ENCODE measurements at regions of chr2 and their contacts with region 1.

Region 1: DNA sequence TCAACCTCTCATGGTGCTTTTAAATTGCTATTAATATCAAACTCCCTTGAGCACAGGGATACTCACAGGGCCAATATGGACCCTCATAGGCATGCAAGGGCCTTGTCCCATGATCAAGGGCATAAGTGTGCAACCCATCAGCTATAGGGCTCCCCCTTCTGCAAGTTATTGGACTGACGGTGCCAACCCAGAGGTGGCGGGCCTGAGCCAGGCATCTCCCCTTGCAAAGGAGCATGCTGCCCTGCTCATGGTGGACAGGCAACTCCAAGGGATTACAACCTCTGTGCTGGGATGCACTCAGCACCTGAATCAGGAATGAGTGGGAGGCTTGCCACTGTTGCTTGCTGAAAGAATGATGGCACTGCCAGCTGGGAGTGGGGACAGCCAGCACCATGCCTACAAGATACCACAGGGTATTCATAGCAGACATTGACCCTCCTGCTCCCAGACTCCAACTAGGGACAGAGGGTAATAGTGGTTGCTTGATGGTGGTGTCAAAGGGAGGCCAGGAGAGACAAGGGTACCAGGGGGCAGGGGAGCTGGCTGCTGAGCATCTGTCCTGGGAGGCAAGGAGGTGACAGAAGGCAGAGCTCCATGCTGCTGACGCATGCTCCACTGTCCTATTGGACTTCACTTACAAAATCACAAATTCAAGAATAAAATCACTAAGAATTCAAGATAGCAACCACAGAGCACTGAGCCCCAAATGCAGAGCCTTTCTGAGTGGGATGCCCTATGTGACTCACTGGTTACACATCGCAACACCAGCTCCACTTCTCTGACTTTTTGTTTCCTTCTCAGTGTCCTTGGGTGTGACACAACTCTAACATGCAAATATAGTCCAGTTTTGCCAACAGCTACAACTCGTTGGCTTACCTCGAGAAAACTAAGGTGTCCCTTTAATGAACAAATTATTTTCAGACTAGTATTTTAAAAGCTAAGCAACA is 157.1 kb upstream of the CCDC150 start:
- DNase-seq: no peak
- ATAC-seq: no peak
- H3K4me3 ChIP-seq: no peak overlapping the region
- H3K27ac ChIP-seq: no peak overlapping the region
- H3K4me1 ChIP-seq: peaks cover 11% of the 10 kb centered on the region
- H3K27me3 ChIP-seq: no peaks in the 10 kb centered on the region

Region 2: DNA sequence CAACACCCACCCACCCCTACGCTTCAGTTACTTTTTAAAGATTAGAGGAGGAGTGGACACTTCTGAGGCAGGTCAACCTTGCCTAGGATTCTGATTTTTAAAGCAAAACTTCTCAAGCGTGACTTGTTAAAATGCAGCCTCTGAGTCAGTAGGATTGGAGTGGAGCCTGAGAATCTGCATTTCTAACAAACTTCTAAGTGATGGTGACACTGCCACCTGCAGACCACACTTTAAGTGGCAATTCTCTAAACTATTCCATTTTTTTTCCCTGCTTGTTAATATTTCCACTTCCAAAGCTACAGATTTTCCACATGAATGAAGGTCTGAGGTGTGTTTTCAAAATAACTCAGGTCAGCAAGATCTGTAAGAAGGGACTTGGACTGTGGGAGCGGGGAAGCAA is 14.0 kb before region 1 on chr2:
- intact Hi-C with region 1: no loop called
- DNase-seq: no peak
- ATAC-seq: no peak
- H3K4me3 ChIP-seq: no peak overlapping the region
- H3K27ac ChIP-seq: no peak overlapping the region
- H3K4me1 ChIP-seq: peaks cover 2% of the 10 kb centered on the region
- H3K27me3 ChIP-seq: no peaks in the 10 kb centered on the region

Region 3: GRCh38 chr2:196586511-196586991 is 104.2 kb after region 1 on chr2:
- intact Hi-C with region 1: loop called in 1 of 4 experiments (anchors 10 kb)
- DNase-seq: no peak
- ATAC-seq: peak; percentile 37 to 46
- H3K4me3 ChIP-seq: no peak overlapping the region
- H3K27ac ChIP-seq: no peak overlapping the region
- H3K4me1 ChIP-seq: no peaks in the 10 kb centered on the region
- H3K27me3 ChIP-seq: no peaks in the 10 kb centered on the region